Aorta (tissue), 5 donors: ENCODE measurements at regions of chr4 and their contacts with region 1.

Region 1: GRCh38 chr4:106266201-106266600 is 49.8 kb downstream of the TBCK start:
- DNase-seq: no peak
- ATAC-seq: no peak
- H3K4me3 ChIP-seq: no peak overlapping the region
- H3K27ac ChIP-seq: no peak overlapping the region
- H3K4me1 ChIP-seq: peaks cover 0 to 2% of the 10 kb centered on the region in 2 donors
- H3K27me3 ChIP-seq: no peaks in the 10 kb centered on the region

Region 2: GRCh38 chr4:106315968-106316772 is 50.0 kb after region 1 on chr4 and contains the starts of genes AIMP1 and TBCK:
- intact Hi-C with region 1: loop called (anchors 1 to 5 kb)
- DNase-seq: peak; percentile 94 to 95
- ATAC-seq: peak; percentile 98
- H3K4me3 ChIP-seq: peak within 1 kb of the TSS; percentile 60 to 98
- H3K27ac ChIP-seq: peak within 1 kb of the TSS; percentile 92 to 98
- H3K4me1 ChIP-seq: peaks cover 0 to 3% of the 10 kb centered on the region in 2 donors
- H3K27me3 ChIP-seq: no peaks in the 10 kb centered on the region
- total RNA-seq, gene AIMP1: 39.3 to 45.6 TPM
- total RNA-seq, gene TBCK: 46.8 to 64.1 TPM

Region 3: DNA sequence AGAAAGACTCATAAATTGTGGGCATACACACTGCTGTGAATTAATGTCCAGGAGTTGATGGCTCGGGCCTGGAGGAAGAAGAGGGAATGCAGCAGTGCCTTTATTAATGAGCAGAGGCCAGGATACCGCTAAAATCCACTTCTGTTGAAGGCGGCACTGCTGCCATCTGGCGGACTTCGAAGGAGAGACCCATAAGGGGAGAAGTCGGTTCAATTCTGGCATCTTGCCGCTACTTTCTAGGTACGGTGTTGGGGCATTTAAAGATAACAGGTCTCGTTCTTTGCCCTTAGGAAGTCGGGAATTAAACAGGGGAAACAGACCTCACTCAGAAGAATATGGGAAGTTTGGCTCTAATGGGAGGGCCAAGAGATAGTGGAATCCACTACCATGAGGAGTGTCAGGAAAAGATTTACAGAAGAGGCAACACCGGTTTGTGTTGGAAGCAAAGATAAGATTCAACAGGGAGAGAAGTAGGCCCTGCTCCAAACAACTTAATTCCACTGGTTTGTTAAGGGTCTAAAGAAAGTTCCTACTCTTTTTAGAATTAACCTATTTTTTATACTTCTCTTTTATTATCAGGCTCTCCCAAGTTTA is 236.0 kb after region 1 on chr4:
- intact Hi-C with region 1: loop called (anchors 5 to 10 kb)
- DNase-seq: peak; percentile 54 to 77
- ATAC-seq: peak; percentile 54
- H3K4me3 ChIP-seq: no peak overlapping the region
- H3K27ac ChIP-seq: no peak overlapping the region
- H3K4me1 ChIP-seq: no peaks in the 10 kb centered on the region
- H3K27me3 ChIP-seq: no peaks in the 10 kb centered on the region

Region 4: GRCh38 chr4:106818764-106819163 is 552.6 kb after region 1 on chr4:
- intact Hi-C with region 1: loop called in 1 of 2 experiments (anchors 10 kb)
- DNase-seq: no peak
- ATAC-seq: no peak
- H3K4me3 ChIP-seq: no peak overlapping the region
- H3K27ac ChIP-seq: no peak overlapping the region
- H3K4me1 ChIP-seq: no peaks in the 10 kb centered on the region
- H3K27me3 ChIP-seq: no peaks in the 10 kb centered on the region